Breast epithelium (tissue), 4 donors: ENCODE measurements at regions of chr9 and their contacts with region 1.

Region 1: DNA sequence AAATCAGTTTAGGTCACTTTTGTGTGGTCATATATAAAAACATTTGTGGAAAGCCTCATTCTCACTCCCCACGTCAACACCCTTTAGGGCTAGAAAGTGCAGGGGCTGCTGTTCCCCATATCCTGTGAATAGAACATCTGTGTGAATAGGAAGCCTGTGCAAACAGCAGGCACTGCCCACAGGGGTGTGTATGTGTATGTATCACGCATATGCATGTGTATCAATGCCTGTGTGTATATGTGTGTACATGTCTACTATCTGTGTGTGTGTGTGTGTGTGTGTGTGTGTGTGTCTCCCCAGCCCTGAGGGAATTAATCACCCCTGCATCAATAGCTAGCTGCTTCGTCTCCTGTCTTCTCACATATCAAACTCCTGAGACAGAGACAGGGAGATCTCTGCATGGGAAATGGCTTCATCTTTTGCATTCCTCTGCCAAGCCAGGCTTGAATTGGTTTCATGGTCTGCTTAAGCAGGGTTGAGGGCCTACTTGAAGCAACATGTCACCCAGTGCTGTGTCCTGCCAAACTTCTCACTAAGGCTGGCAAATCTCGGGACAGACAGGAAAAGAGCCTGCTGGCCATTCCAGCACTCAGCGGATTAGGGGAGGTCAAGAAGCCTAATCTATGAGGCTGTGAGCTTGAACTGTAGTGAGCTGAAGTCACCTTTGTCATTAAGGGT is 265.8 kb downstream of the ADAMTSL1 start:
- DNase-seq: no peak
- H3K4me3 ChIP-seq: no peak overlapping the region
- H3K27ac ChIP-seq: no peak overlapping the region
- H3K4me1 ChIP-seq: no peaks in the 10 kb centered on the region
- H3K27me3 ChIP-seq: no peaks in the 10 kb centered on the region
- CTCF ChIP-seq: no peak
- POLR2A ChIP-seq: no peak

Region 2: DNA sequence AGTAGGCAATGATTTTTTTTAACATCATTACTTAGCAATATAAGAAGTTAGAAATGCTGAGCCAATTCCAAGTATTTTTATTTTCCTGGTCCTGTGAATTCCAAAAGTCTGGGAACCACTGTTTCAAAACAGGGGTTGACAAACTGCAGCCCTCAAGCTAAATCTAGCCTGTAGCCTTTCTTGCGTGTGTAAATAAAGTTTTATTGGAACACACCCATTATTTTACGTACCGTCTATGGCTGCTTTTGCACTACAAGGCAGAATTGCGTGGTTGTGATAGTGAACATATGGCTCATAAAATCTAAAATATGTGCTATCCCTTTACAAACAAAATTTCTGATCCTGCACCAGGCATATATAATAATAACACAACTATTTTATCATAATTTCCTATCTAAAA is 14.1 kb after region 1 on chr9:
- intact Hi-C with region 1: loop called (anchors 1 kb)
- DNase-seq: no peak
- H3K4me3 ChIP-seq: no peak overlapping the region
- H3K27ac ChIP-seq: no peak overlapping the region
- H3K4me1 ChIP-seq: no peaks in the 10 kb centered on the region
- H3K27me3 ChIP-seq: no peaks in the 10 kb centered on the region
- CTCF ChIP-seq: no peak
- POLR2A ChIP-seq: no peak